ENCODE measurements at regions of chr2 and their contacts with region 1.

Region 1: GRCh38 chr2:238462782-238463396 is 36.2 kb downstream of the ASB1 start:
- DNase-seq: peak; percentile 63
- H3K4me3 ChIP-seq: no peak overlapping the region
- H3K27ac ChIP-seq: no peak overlapping the region
- H3K4me1 ChIP-seq: no peaks in the 10 kb centered on the region
- CTCF ChIP-seq: peak; percentile 88

Region 2: GRCh38 chr2:238362626-238363025 is 100.3 kb before region 1 on chr2:
- CTCF ChIA-PET with region 1: no interaction called
- POLR2A ChIA-PET with region 1: no interaction called
- intact Hi-C with region 1: loop called (anchors 2 kb)
- DNase-seq: no peak
- H3K4me3 ChIP-seq: no peak overlapping the region
- H3K27ac ChIP-seq: no peak overlapping the region
- H3K4me1 ChIP-seq: no peaks in the 10 kb centered on the region
- CTCF ChIP-seq: no peak

Region 3: DNA sequence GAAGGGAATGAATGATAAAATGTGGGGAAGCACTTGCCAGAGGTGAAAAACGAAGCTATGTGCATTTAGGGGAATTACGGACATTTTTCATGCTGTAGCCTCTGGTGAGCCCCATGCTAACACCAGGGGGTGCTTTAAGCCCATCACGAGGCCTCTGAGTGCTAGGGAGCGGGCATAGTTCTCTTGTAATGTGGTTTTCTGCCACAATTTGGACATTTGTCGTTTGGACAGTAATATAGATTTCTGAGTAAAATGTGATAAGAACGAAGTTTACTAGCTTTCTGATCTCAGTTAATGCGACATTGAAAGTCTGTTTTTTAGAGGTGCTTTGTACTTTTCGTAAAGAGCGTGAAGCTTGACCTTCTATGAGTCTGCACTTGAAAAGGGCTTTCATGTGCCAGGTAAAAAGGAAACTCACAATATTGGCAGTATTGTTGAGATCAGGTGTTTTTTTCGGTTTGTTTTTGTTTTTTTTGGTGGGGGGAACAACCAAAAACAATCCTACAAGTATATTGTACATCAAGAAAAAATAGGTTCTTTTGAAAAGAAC is 92.0 kb before region 1 on chr2:
- CTCF ChIA-PET with region 1: no interaction called
- POLR2A ChIA-PET with region 1: no interaction called
- intact Hi-C with region 1: loop called (anchors 5 kb)
- DNase-seq: peak; percentile 59
- H3K4me3 ChIP-seq: no peak overlapping the region
- H3K27ac ChIP-seq: no peak overlapping the region
- H3K4me1 ChIP-seq: no peaks in the 10 kb centered on the region
- CTCF ChIP-seq: peak; percentile 79

Region 4: DNA sequence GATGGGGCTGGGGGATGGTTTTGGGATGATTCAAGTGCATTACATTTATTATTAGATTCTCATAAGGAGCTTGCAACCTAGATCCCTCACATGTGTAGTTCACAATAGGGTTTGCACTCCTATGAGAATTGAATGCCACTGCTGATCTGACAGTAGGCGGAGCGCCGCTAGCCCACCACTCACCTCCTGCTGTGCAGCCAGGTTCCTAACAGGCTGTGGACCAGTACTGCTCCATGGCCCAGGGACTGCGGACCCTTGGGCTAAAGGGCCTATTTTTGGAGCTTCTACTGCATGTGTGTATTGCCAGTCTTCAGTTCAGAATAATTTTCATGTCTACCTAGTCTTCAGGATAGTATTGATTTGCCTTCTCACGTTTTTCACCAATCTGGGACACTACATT is 219.6 kb after region 1 on chr2:
- CTCF ChIA-PET with region 1: no interaction called
- POLR2A ChIA-PET with region 1: no interaction called
- intact Hi-C with region 1: no loop called
- DNase-seq: no peak
- H3K4me3 ChIP-seq: no peak overlapping the region
- H3K27ac ChIP-seq: no peak overlapping the region
- H3K4me1 ChIP-seq: no peaks in the 10 kb centered on the region
- CTCF ChIP-seq: no peak

Measured in OCI-LY7 (cell line).